ENCODE measurements at regions of chr10 and their contacts with region 1.

Region 1: GRCh38 chr10:6088721-6089390 is at the start of gene RBM17:
- DNase-seq: peak; percentile 94
- H3K4me3 ChIP-seq: peak within 1 kb of the TSS; percentile 95
- CTCF ChIP-seq: peak; percentile 100

Region 2: DNA sequence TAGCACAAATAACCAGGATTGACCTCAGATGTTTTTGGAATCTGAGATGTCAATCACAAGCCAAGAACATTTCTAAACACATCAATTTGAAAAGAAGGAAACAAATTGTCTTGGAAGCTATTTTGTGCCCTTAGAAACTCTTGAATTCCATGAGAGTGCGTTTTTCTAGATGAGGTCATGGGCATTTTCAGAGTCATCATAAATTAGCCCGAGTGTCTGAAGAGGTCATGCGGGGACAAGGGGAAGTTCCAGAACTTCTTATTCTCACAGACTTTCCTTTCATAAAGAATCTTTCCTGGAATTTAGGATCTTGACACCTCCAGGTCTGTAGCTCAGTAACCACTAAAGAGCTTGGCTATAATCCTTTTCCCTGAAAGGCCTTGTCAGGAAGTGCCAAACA is 54.9 kb before region 1 on chr10:
- in situ Hi-C with region 1: no loop called
- DNase-seq: no peak
- H3K4me3 ChIP-seq: no peak overlapping the region
- CTCF ChIP-seq: no peak

Region 3: DNA sequence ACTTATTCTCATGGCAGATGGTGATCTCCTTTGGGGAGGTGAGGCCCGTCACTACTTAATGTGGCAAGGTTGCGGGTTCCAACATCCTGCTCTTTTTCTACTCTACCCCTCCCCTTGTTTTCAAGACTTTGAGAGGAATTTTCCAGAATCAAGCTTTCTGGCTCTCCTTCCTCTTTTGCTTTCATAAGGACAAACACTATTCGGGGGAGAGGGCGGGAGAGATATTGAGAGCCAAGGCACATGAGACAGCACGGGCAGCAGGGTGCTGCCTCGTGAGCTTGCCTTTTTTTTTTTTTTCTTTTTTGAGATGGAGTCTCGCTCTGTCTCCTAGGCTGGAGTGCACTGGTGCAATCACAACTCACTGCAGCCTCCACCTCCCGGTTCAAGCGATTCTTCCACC is 107.0 kb after region 1 on chr10:
- in situ Hi-C with region 1: no loop called
- DNase-seq: no peak
- H3K4me3 ChIP-seq: no peak overlapping the region
- CTCF ChIP-seq: no peak

Region 4: GRCh38 chr10:6382081-6382480 is 293.2 kb after region 1 on chr10:
- in situ Hi-C with region 1: loop called (anchors 25 kb)
- DNase-seq: no peak
- H3K4me3 ChIP-seq: no peak overlapping the region
- CTCF ChIP-seq: no peak

Measured in astrocyte of the cerebellum (primary cell).